ENCODE measurements at regions of chr3 and their contacts with region 1.

Region 1: DNA sequence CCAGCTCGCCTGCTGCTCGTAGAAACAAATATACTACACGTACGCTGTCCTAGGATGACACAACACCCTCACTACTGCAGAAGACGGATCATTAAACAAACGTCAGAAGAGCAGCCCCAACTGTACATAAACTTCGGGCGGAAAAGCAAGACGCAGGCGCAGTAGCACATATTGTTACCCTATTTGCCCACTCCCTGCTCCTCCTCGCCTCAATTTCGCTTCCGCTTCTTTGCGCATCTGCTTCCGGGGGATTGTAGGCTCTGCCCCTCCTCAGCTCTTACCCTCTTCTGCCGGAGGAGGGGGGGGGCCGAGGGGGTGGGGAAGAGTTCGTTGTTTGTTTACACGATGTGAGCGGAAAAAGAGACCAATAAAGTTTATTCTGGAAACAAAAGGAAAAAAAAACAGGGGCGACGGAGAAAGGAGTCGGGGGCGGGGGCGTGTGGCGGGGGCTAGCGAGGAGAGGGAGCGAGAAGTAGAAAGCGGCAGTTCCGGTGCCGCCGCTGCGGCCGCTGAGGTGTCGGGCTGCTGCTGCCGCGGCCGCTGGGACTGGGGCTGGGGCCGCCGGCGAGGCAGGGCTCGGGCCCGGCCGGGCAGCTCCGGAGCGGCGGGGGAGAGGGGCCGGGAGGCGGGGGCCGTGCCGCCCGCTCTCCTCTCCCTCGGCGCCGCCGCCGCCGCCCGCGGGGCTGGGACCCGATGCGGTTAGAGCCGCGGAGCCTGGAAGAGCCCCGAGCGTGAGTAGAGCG is at the start of gene PIK3CA:
- DNase-seq: peak; percentile 91 to 98
- ATAC-seq: peak; percentile 89
- total RNA-seq, gene PIK3CA: 13.0 to 18.0 TPM

Region 2: GRCh38 chr3:178966299-178967176 is 181.5 kb before region 1 on chr3:
- intact Hi-C with region 1: no loop called
- DNase-seq: no peak
- ATAC-seq: peak; percentile 42

Region 3: DNA sequence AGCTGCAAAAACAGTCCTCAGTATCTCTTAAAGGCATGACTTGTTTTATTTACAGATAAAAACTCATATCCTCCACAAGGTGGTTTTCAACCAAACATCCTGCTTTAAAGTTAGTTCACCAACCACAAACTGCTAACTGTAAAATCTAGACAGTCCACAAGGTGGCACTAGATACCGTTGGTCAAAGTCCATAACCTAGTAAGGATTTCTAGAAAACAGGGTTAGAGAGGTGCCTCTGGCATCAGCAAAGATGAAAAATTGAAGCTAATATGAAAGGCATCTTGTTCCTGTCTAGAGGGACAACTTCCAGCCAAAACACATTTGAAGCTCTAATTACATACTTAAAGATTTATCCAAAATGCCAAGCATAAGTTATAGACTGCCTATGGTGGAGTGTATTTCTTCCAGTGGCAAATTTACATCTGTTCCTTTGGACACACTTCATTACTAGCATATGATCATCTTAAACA is 132.5 kb before region 1 on chr3:
- intact Hi-C with region 1: loop called in 1 of 2 experiments (anchors 10 kb)
- DNase-seq: peak in 1 of 2 donors; percentile 16
- ATAC-seq: peak; percentile 89

Region 4: GRCh38 chr3:179027326-179027900 is 120.6 kb before region 1 on chr3:
- intact Hi-C with region 1: no loop called
- DNase-seq: no peak
- ATAC-seq: no peak

Region 5: DNA sequence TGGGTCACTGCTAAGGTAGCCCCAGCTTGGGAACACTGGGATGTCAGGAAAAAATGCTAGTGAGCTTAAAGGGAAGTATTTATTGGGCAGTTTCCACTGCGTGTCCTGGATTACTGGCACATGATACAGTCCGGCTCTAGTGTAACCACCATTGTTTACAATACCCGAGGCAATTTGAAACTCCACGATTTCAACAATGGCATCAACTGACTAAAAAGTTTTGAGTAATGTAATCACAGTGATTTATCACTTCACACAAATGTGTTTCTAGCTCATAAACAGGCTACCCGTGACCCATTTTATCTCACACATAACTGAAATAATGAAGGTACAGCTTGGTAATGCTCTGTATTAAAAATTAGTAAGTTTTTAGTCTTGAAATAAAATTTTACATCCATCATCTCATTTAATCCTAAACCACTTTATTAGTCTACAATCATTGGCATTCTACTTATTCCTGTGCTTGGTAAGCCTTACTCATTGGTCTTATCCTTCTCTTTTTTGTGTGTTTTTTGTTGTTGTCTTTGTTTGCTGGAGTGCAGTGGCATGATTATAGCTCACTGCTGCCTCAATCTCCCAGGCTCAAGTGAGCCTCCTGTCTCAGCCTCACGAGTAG is 84.0 kb before region 1 on chr3:
- intact Hi-C with region 1: no loop called
- DNase-seq: no peak
- ATAC-seq: no peak

Region 6: DNA sequence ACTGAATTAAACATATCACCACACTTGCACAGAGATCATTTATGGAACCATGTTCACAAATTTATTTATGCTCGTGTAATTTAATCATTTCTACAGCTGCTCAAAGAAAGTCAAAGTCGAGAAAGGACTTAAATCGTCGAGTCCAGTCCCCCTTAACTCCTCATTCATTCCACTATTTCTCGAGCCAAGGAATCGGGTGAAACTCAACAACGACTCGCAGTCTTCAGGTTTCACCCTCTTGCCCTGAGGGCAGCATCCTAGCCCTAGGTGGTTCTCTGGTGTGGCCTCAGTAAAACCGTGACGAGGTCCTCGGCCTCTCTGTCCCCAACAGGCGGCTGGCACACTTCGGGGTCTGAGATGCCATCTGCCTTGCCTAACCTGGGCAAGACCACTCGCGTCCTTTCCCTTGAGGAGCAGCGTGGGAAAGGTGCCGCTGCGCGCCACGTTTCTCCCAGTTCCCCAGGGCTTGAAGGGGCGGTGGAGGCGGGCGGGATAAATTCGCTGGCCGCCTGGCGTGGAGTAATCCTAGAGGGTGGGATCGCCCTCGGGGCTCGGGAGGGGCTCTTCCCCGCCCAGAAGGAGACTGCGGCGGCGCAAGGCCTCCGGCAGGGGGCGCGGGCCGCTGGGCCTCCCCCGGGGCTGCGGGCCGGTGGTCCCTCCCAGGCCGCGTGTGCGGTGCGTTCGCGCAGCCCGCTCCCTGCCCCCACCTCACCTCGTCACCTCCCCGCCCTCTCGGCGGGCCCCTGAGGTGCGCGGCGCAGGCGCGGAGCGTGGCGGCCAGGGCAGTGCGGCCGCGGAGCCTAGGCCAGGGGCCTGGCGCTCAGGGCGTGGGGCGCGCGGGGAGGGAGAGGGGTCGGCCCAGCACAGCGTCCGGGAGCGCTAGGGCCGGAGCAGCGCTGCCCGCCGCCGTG is 174.5 kb after region 1 on chr3 and contains the start of gene ZNF639:
- intact Hi-C with region 1: loop called in 1 of 2 experiments (anchors 5 kb)
- DNase-seq: peak; percentile 75 to 83
- ATAC-seq: peak; percentile 80
- total RNA-seq, gene ZNF639: 22.6 to 25.3 TPM

Measured in left colon (tissue), 2 donors.